ENCODE measurements at regions of chr22 and their contacts with region 1.

Region 1: DNA sequence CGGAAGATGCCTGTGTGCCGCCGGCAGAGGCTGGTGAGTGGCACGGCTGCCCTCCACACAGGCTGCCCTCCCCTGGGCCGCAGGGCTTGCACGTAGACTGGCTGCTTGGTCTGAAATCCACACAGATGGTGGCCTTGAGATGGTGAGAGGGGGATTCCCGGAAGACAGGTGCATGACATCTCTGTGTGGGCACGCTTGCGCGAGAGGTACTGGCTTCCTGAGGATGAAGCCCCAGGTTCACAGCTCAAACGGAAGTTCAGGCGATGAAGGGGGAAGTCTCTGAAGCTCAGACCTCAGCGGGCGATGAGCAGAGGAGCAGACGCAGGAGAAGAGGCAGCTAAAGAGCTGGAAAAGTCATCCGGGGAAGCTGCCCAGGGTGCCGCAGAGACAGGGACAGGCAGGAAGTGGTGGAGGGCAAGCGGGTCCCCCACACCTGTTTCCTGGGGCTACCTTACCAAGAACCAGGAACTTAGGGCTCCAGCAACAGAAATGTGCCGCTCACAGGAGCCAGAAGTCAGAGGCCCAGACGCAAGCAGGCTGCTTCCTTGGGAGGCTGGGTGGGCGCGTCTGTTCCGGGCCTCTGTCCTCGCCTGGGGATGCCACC is 7.2 kb downstream of the CRELD2 start:
- DNase-seq: peak; percentile 75
- ATAC-seq: peak; percentile 76
- H3K4me3 Mint-ChIP-seq: peak overlapping the region; percentile 81
- H3K27ac Mint-ChIP-seq: peak overlapping the region; percentile 98
- H3K4me1 Mint-ChIP-seq: peaks cover 58% of the 10 kb centered on the region
- H3K27me3 Mint-ChIP-seq: no peaks in the 10 kb centered on the region
- CTCF ChIP-seq: no peak

Region 2: DNA sequence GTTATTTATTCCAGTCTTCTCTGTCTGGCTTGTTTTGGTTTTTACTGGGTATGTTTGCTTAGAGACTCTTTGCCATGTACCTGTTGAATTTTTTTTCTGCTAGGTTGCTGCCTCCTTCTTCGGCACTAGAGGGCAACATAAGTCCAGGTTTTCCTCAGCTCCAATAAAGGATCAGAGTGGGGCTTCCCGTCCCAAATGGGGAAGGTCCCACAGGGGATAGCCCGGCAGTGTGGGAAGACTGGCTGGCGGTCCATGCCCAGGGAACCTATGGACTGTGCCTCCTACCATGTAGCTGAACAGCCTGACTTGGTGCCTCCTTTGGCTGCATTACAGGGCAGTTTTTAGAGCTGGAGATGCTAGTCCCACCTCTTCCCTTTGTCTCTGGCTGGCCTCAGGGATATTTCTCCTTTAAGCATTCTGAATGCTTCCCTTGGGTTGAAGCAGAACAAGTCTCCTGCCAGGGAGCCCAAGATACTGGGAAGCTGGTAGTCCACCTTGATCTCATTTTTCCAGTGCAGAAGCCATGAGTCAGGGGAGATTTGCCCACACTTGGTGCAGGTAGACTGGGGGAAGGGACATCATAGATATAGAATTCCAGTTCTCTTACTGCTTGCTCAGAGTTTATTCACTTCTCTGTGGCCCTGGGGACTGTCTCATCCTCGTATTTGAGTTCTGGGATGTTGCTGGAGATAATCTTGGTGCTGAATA is 158.1 kb before region 1 on chr22:
- CTCF ChIA-PET with region 1: interaction called, 13 read pairs
- POLR2A ChIA-PET with region 1: interaction called, 7 read pairs
- intact Hi-C with region 1: loop called (anchors 1 kb)
- DNase-seq: peak; percentile 15
- ATAC-seq: peak; percentile 68
- H3K4me3 Mint-ChIP-seq: no peak overlapping the region
- H3K27ac Mint-ChIP-seq: no peak overlapping the region
- H3K4me1 Mint-ChIP-seq: peaks cover 9% of the 10 kb centered on the region
- H3K27me3 Mint-ChIP-seq: no peaks in the 10 kb centered on the region
- CTCF ChIP-seq: no peak

Region 3: GRCh38 chr22:49861642-49862495 is 63.8 kb before region 1 on chr22:
- CTCF ChIA-PET with region 1: no interaction called
- POLR2A ChIA-PET with region 1: no interaction called
- intact Hi-C with region 1: no loop called
- DNase-seq: no peak
- ATAC-seq: no peak
- H3K4me3 Mint-ChIP-seq: no peak overlapping the region
- H3K27ac Mint-ChIP-seq: no peak overlapping the region
- H3K4me1 Mint-ChIP-seq: peaks cover 29% of the 10 kb centered on the region
- H3K27me3 Mint-ChIP-seq: no peaks in the 10 kb centered on the region
- CTCF ChIP-seq: no peak

Region 4: DNA sequence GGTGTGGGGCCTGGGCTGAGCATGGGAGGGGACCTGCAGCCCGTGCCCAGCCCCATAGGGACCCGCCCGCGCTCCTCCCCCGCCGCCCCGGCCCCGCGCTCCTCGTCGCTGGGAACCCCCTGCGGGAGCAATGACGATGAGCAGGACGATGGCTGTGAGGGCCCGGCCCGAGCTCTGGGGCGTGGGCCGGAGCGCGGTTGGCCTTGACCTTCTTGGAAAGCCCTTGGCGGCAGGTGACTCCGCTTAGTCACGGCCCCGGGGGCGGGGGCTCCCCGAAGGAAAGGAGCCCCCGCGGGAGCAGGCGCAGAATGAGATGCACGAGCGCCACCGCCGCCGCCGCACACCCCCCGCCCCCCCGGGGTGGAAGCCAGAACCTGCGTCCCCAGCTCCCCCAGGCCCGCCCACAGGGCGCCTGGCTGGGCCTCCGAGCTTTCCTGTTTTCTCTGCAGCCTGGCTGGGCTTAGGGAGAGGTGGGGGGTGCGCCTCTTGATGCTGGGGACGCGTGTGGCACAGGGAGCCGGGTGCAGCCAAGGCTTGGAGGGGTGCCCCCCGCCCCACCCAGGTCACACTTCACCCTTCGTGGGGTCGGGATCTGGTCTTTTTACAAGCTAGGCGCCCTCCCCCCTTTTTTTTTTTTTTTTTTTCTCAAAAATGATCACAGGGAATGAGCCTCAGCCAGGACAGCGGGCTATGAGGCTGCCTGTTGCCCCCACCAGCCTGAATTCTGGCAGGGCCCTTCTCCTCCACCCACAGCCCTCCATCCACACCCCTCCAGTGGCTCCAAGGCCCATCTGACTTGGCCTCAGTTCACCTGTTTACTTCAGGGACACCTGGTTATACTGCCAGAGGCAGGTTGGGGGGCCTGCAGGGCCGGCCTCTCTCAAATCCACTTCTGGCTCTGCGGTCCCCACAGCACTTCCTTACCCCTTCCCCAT is 10.7 kb after region 1 on chr22:
- CTCF ChIA-PET with region 1: interaction called, 4 read pairs
- POLR2A ChIA-PET with region 1: interaction called, 87 read pairs
- intact Hi-C with region 1: loop called (anchors 1 kb)
- DNase-seq: peak; percentile 92
- ATAC-seq: peak; percentile 75
- H3K4me3 Mint-ChIP-seq: peak overlapping the region; percentile 61
- H3K27ac Mint-ChIP-seq: peak overlapping the region; percentile 82
- H3K4me1 Mint-ChIP-seq: peaks cover 42% of the 10 kb centered on the region
- H3K27me3 Mint-ChIP-seq: no peaks in the 10 kb centered on the region
- CTCF ChIP-seq: no peak

Region 5: DNA sequence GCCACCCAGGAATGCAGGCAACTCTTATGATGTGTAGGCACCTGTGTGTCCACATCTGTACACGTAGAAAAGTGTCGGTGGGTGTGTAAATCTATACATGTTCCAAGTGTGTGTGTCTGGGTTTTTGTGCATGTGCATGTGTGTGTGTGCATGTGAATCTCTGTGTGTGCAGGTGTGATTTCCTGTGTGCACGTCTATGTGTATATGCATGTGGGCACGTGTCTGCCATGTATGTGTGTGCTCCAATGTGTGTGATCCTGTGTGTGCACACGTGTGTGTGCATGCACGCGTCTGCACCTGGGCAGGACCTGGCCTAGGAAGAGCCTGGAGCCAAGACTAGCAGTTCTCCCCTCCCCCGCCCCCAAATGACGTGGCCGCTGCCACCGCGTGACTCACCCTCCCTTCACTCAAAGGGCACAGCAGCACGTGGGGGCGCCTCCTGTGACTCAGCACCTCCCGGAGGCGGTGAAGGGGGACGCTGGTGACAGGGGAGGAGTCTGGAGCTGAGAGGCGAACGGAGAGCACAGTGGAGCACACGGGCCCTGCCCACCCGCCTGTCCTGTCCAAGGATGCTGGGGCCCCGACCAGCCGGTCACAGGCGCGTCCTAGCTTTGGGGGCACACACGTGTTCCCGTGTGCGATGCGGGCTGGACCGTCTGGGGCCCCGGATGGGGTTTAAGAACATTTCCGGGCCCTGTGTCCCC is 45.1 kb after region 1 on chr22:
- CTCF ChIA-PET with region 1: no interaction called
- POLR2A ChIA-PET with region 1: interaction called, 828 read pairs
- intact Hi-C with region 1: no loop called
- DNase-seq: peak; percentile 81
- ATAC-seq: peak; percentile 89
- H3K4me3 Mint-ChIP-seq: peak overlapping the region; percentile 80
- H3K27ac Mint-ChIP-seq: peak overlapping the region; percentile 85
- H3K4me1 Mint-ChIP-seq: peaks cover 38% of the 10 kb centered on the region
- H3K27me3 Mint-ChIP-seq: no peaks in the 10 kb centered on the region
- CTCF ChIP-seq: no peak

Region 6: DNA sequence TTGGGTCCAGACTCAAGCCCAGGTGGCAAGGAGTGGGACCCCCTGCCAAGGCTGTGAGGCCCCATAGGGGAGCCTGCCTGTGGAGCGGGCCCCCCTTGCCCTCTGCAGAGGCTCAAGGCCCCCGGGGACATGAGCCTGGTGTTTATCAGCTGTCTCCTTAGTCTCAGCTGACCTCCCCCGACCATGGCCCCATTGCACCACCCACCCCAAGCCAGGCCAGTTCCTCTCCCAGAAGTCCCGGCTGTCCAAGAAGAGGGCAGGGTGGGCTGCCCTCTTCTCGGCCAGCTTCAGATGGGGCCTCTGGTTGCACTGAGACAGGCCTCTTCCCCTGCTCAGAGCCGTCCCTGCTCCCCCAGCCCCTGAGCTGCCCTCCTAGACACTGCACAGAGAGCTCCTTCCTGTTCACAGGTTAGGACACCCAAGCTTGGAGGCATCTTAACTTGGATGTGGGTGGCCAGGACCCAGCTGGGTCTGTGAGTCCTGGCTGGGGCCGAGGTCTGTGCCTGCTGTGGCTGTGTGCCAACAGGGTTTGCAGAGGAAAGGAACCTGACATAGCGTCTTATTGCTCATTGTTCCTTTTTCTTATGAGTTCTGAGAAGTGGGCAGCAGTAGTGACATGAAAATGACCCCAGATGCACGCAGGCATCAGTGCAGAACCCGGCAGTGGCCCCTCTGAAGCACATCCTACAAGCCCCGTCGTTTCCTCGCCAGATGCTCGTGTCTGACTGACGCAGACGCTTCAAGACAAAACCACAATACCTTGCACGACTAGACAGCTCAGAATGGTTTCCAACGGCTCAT is 265.5 kb after region 1 on chr22:
- CTCF ChIA-PET with region 1: no interaction called
- POLR2A ChIA-PET with region 1: interaction called, 36 read pairs
- intact Hi-C with region 1: loop called (anchors 1 kb)
- DNase-seq: peak; percentile 73
- ATAC-seq: peak; percentile 49
- H3K4me3 Mint-ChIP-seq: peak overlapping the region; percentile 83
- H3K27ac Mint-ChIP-seq: peak overlapping the region; percentile 99
- H3K4me1 Mint-ChIP-seq: peaks cover 86% of the 10 kb centered on the region
- H3K27me3 Mint-ChIP-seq: no peaks in the 10 kb centered on the region
- CTCF ChIP-seq: no peak

Measured in activated B cell treated with CpG ODN at 0.5 μM for 24 hours (primary cell).